ENCODE measurements at regions of chr1 and their contacts with region 1.

Region 1: GRCh38 chr1:172719694-172720138 is 60.8 kb downstream of the FASLG start:
- DNase-seq: peak; percentile 75
- H3K4me3 Mint-ChIP-seq: peak overlapping the region; percentile 3
- H3K27ac Mint-ChIP-seq: no peak overlapping the region
- H3K4me1 Mint-ChIP-seq: peaks cover 35% of the 10 kb centered on the region
- H3K27me3 Mint-ChIP-seq: no peaks in the 10 kb centered on the region
- CTCF ChIP-seq: peak; percentile 94

Region 2: GRCh38 chr1:172429331-172430127 is 290.2 kb before region 1 on chr1:
- CTCF ChIA-PET with region 1: interaction called, 19 read pairs
- POLR2A ChIA-PET with region 1: interaction called, 3 read pairs
- intact Hi-C with region 1: loop called (anchors 1 kb)
- DNase-seq: peak; percentile 83
- H3K4me3 Mint-ChIP-seq: no peak overlapping the region
- H3K27ac Mint-ChIP-seq: no peak overlapping the region
- H3K4me1 Mint-ChIP-seq: peaks cover 5% of the 10 kb centered on the region
- H3K27me3 Mint-ChIP-seq: no peaks in the 10 kb centered on the region
- CTCF ChIP-seq: peak; percentile 78

Region 3: DNA sequence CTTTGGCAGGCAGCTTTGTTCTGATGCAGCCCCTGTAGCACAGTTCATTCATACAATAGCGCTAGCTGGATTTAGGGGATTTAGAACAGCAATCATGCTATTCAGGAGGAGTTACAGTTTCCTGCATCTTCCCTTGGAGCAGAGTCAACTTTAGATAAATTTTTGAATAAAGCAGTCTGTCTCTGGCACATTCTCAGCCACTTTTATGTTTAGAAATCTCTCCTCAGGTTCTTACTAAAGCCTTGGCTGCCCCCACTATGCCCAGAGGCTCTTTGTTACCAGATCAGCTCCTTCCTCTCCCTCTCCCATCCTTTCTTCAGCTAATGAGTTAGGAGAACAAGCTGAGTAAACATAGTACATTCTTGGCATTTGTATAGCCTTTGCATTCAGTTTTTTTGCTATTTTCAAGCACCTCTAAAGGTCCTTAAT is 258.8 kb before region 1 on chr1:
- CTCF ChIA-PET with region 1: interaction called, 10 read pairs
- POLR2A ChIA-PET with region 1: interaction called, 3 read pairs
- intact Hi-C with region 1: no loop called
- DNase-seq: no peak
- H3K4me3 Mint-ChIP-seq: no peak overlapping the region
- H3K27ac Mint-ChIP-seq: no peak overlapping the region
- H3K4me1 Mint-ChIP-seq: peaks cover 12% of the 10 kb centered on the region
- H3K27me3 Mint-ChIP-seq: no peaks in the 10 kb centered on the region
- CTCF ChIP-seq: no peak

Region 4: DNA sequence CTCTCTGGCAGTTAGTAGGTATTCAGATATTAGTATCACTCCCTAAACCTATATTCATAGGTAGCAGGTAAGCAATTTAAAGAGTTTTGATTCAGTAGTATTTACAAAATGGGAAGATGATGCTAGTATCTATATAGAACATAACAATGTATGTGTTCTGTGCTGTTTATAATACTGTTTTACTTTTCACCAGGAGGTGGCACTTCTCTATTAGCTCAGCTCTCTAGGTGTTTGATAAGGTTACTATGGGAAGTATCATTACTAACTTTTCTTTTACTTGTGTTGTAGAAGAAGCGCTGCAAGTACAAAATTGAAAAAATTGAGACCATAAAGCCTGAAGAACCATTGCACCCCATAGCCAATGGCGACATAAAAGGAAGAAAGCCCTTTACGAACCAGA is 110.2 kb before region 1 on chr1:
- CTCF ChIA-PET with region 1: interaction called, 220 read pairs
- POLR2A ChIA-PET with region 1: interaction called, 31 read pairs
- intact Hi-C with region 1: loop called (anchors 1 kb)
- DNase-seq: peak; percentile 40
- H3K4me3 Mint-ChIP-seq: no peak overlapping the region
- H3K27ac Mint-ChIP-seq: no peak overlapping the region
- H3K4me1 Mint-ChIP-seq: peaks cover 8% of the 10 kb centered on the region
- H3K27me3 Mint-ChIP-seq: no peaks in the 10 kb centered on the region
- CTCF ChIP-seq: peak; percentile 37

Region 5: DNA sequence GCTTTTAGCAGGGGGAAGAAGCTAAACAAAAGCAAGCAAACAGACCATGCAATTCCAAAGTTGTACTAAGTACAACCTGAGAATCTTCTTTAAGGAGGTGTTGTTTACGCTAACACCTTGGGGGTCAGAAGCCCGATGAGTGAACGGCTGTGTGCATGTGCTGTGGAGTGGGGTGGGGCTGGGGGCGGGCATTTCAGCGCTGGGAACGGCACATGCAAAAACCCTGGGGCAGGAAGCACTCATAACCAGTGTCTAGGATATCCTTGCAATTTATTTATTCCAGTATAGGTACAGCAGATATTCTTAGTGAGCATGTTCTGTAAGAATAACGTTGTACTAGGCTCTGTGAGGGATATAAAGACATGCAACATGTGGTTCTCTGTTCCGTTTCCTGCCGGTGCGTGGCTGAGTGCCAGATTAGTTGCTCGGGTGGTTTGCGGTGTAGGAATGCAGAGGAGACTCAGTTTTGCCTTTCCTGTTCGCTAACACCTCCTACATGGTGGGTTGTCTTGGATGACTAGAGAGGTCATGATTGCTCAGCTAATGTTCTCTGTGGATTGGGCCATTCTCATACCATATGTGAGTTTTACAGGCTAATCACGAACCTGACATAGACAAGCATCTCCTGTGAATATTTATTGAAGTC is 57.1 kb before region 1 on chr1:
- CTCF ChIA-PET with region 1: interaction called, 11 read pairs
- POLR2A ChIA-PET with region 1: interaction called, 3 read pairs
- intact Hi-C with region 1: no loop called
- DNase-seq: peak; percentile 74
- H3K4me3 Mint-ChIP-seq: no peak overlapping the region
- H3K27ac Mint-ChIP-seq: no peak overlapping the region
- H3K4me1 Mint-ChIP-seq: peaks cover 21% of the 10 kb centered on the region
- H3K27me3 Mint-ChIP-seq: no peaks in the 10 kb centered on the region
- CTCF ChIP-seq: no peak

Region 6: GRCh38 chr1:172764378-172764777 is 44.7 kb after region 1 on chr1:
- CTCF ChIA-PET with region 1: no interaction called
- POLR2A ChIA-PET with region 1: no interaction called
- intact Hi-C with region 1: no loop called
- DNase-seq: no peak
- H3K4me3 Mint-ChIP-seq: no peak overlapping the region
- H3K27ac Mint-ChIP-seq: no peak overlapping the region
- H3K4me1 Mint-ChIP-seq: peaks cover 20% of the 10 kb centered on the region
- H3K27me3 Mint-ChIP-seq: no peaks in the 10 kb centered on the region
- CTCF ChIP-seq: no peak